Activated T-helper 2 cell treated with anti-CD3 and anti-CD28 coated beads, Interferon-gamma antibody, Interleukin-2, Interleukin-4, amounts not matched to agents 10 μg/mL and 5 μg/mL and 100 μg/mL, durations not matched to agents 14 hours and 24 hours and 36 hours (primary cell): ENCODE measurements at regions of chr3 and their contacts with region 1.

Region 1: DNA sequence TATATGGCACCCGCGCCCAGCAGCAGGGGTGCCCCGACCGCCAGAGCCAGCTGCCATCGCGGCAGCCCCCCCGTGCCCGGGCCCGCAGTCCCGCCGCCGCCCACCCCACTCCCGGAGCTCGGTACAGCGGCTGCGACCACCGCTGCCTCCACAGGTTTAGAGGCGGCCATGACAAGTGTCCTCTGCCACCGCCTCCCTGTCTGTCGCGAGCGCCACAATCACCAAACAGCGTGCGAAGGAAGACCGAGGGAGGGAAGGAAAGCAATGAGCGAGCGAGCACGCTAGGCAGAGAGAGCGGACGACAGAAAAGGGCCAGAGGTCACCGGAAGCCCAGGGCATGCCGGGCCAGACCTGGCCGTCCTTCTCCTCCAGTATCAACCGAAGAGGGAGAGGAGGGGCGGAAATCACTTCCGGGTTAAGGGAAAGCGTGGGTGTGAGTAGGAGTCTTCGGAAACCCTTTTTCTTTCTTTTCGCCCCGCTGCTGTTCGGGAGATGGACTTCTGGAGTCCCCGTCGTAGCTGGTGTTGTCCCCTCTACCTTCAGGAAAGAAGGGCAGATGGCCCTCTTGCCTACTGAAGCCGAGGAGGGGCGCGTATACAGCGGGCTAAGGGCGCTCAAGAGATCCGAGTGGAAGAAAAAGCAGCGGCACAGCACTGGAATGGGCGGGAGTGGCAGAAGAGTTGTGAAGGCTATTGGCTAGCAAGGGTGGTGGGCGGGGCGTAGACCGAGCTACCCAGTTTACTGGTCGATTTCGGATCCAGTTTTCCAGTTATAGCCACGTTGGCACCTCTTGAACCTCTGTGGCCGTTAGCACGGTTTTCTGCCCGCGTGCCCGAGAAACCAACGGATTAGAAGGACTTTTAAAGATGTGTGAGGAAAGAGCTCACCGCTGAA is at the starts of genes LNP1 and TOMM70:
- DNase-seq: peak; percentile 92
- H3K4me3 Mint-ChIP-seq: peak within 1 kb of the TSS; percentile 90
- H3K27ac Mint-ChIP-seq: peak within 1 kb of the TSS; percentile 98
- H3K4me1 Mint-ChIP-seq: peaks cover 41% of the 10 kb centered on the region
- H3K27me3 Mint-ChIP-seq: no peaks in the 10 kb centered on the region
- total RNA-seq, gene LNP1: 2.0 and 2.8 TPM in 2 replicates
- total RNA-seq, gene TOMM70: 52.8 and 54.4 TPM in 2 replicates

Region 2: DNA sequence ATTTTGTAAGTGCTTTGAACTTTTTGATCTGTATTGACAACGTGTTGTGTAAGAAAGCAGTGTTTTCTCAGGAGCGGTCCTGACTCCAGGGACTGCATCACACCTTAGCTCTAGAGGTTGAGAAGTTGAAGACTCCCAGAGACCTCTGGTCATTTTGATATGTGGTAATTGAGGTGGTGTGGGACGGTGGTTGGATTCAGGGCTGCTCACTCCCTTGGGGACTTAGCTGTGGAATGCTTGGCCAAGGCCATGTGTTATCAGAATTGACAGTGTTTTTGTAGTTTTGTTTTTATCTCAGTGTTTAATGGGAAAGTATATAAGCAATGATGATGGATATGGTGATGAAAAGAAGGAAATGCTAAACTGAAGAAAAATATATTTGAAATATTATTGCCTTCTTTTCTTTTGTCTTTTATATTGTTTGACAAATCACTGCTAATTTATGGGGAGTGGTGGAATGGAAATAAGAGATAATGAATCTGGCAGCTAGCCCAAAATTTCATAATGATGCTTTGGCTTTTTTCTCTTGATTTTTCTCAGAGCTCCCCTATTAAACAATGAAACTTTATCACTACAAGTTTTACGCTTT is 567.3 kb before region 1 on chr3:
- intact Hi-C with region 1: loop called (anchors 5 kb)
- DNase-seq: no peak
- H3K4me3 Mint-ChIP-seq: no peak overlapping the region
- H3K27ac Mint-ChIP-seq: no peak overlapping the region
- H3K4me1 Mint-ChIP-seq: peaks cover 26% of the 10 kb centered on the region
- H3K27me3 Mint-ChIP-seq: no peaks in the 10 kb centered on the region

Region 3: DNA sequence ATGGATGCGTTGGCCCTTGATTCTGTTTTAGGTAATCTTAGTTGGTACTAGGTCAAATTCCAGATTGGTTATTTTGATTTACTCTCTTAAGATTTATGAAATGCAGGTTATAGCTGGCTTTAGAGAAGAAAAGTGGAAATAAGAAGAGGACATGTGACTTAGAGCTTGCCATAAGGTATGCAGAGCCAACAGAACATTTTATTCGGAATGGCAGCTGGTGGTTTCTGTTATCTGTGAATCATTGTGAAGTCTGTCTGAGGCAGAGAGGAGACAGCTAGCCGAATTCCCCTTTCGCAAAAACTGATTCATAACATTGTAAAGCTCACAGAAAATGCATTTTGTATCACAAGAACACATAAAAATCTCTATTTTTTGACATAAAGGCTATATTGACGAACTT is 368.8 kb before region 1 on chr3:
- intact Hi-C with region 1: no loop called
- DNase-seq: no peak
- H3K4me3 Mint-ChIP-seq: no peak overlapping the region
- H3K27ac Mint-ChIP-seq: no peak overlapping the region
- H3K4me1 Mint-ChIP-seq: peaks cover 18% of the 10 kb centered on the region
- H3K27me3 Mint-ChIP-seq: no peaks in the 10 kb centered on the region

Region 4: GRCh38 chr3:100260685-100261484 is 140.1 kb before region 1 on chr3 and contains the start of gene TBC1D23:
- intact Hi-C with region 1: loop called (anchors 1 kb)
- DNase-seq: peak; percentile 98
- H3K4me3 Mint-ChIP-seq: peak within 1 kb of the TSS; percentile 95
- H3K27ac Mint-ChIP-seq: peak within 1 kb of the TSS; percentile 97
- H3K4me1 Mint-ChIP-seq: peaks cover 40% of the 10 kb centered on the region
- H3K27me3 Mint-ChIP-seq: no peaks in the 10 kb centered on the region
- total RNA-seq, gene TBC1D23: 18.6 and 18.7 TPM in 2 replicates

Region 5: GRCh38 chr3:100277255-100277800 is 123.7 kb before region 1 on chr3:
- intact Hi-C with region 1: no loop called
- DNase-seq: no peak
- H3K4me3 Mint-ChIP-seq: no peak overlapping the region
- H3K27ac Mint-ChIP-seq: no peak overlapping the region
- H3K4me1 Mint-ChIP-seq: peaks cover 4% of the 10 kb centered on the region
- H3K27me3 Mint-ChIP-seq: no peaks in the 10 kb centered on the region

Region 6: GRCh38 chr3:100340527-100340926 is 60.5 kb before region 1 on chr3:
- intact Hi-C with region 1: no loop called
- DNase-seq: no peak
- H3K4me3 Mint-ChIP-seq: no peak overlapping the region
- H3K27ac Mint-ChIP-seq: no peak overlapping the region
- H3K4me1 Mint-ChIP-seq: peaks cover 21% of the 10 kb centered on the region
- H3K27me3 Mint-ChIP-seq: no peaks in the 10 kb centered on the region

Region 7: DNA sequence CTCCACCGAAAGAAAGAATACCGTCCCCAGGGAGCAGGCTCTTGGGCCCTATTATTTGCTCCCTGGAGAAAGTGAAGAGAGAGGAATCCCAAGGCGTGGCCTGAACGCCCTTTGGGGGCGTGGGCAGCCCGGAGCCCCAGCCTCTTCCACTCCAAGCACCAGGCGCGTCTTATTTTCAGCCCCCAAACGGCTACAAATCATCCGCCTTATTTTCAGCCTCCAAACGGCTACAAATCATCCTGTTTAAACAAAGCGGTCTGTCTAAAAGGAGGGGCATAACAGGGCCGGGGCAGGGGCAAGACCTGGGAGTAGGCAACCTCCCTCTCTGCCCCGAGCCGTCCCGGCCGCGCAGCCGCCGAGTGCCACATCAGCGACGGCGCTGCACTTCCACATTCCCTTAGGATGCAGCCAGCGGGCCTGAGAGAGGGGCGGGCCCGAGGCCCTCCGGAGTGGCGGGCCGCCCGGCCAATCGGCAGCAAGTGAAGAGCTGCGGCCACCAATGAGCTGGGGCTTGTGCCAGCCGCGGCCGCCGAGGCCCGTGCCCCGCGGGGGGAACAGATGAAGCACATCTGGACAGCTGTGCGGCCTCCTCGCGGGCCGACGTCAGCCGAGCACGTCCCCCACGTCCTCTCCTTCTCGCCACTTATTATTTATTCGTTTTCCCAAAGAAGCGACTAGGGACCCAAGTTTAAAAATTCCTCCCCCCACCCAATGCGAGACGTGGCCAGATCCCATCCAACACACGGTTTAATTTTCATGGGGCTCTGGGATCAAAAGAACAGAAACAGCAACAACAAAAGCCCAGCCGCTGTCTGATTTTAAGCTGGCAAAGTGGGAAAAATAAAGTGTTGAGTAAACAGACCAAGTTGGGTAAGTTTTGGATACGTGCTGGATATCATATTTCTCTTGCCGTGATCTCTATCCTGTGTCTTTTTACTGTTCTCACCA is 91.3 kb after region 1 on chr3 and contains the start of gene TMEM45A:
- intact Hi-C with region 1: loop called (anchors 1 kb)
- DNase-seq: peak; percentile 74
- H3K4me3 Mint-ChIP-seq: peak within 1 kb of the TSS; percentile 87
- H3K27ac Mint-ChIP-seq: peak within 1 kb of the TSS; percentile 58
- H3K4me1 Mint-ChIP-seq: peaks cover 8% of the 10 kb centered on the region
- H3K27me3 Mint-ChIP-seq: peaks cover 32% of the 10 kb centered on the region
- total RNA-seq, gene TMEM45A: 0.96 and 1.1 TPM in 2 replicates

Region 8: DNA sequence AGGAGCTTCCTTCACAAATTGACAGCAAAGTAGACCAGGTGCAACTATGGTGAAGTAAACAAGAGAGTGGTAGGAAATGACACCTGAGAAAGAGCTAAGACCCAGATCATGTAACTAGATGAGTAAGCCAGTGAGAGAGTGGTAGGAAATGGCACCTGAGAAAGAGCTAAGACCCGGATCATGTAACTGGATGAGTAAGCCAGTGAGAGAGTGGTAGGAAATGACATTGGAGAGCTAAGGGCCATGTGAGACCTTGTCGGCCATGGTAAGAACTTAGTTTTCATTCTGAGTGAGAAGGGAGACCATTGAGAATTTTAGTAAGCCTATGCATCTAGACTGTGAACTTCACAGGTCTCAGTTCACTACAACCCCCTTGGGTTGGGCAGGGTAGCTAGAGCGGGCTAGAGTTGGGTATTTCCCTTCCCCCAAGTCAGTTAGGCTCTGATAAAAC is 1117.4 kb after region 1 on chr3:
- intact Hi-C with region 1: loop called (anchors 5 kb)
- DNase-seq: peak; percentile 55
- H3K4me3 Mint-ChIP-seq: peak overlapping the region; percentile 53
- H3K27ac Mint-ChIP-seq: peak overlapping the region; percentile 85
- H3K4me1 Mint-ChIP-seq: peaks cover 39% of the 10 kb centered on the region
- H3K27me3 Mint-ChIP-seq: no peaks in the 10 kb centered on the region